ENCODE measurements at regions of chr15 and their contacts with region 1.

Region 1: DNA sequence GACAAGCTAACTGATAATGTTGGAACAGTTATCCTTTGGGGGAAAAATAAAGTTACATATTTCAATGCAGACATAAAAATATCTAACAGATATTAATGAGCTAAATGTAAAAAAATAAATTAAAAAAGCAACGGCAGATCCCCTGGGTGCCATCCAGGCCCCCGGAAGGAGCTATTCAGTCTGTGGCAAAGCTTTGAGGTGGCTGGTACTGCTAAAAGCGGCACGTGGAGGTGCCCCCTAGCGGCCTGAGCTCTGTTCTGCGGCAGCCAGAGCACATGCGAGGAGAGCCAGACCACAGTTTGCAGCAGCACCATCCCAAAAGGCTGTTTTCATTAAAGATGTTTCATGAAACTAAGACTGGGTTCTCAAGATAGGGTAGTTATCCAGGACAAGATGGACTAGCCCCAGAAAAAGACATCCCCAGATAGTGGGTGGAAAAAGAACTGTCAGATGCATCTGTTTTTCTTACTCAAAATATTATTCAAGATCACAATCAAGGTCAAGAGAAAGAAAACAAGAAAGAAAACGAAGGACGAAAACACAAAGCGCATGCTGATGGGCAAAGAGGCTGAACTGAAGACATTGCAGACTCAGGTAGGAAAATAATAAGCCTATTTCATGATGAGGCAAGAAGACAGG is 18.7 kb downstream of the AP3S2 start:
- DNase-seq: peak; percentile 86
- H3K4me3 ChIP-seq: no peak overlapping the region
- H3K27ac ChIP-seq: no peak overlapping the region; a peak in 1 of 4 replicates
- H3K4me1 ChIP-seq: no peaks in the 10 kb centered on the region
- H3K27me3 ChIP-seq: no peaks in the 10 kb centered on the region
- CTCF ChIP-seq: peak; percentile 98
- EP300 ChIP-seq: no peak
- RAD21 ChIP-seq: peak; percentile 85

Region 2: DNA sequence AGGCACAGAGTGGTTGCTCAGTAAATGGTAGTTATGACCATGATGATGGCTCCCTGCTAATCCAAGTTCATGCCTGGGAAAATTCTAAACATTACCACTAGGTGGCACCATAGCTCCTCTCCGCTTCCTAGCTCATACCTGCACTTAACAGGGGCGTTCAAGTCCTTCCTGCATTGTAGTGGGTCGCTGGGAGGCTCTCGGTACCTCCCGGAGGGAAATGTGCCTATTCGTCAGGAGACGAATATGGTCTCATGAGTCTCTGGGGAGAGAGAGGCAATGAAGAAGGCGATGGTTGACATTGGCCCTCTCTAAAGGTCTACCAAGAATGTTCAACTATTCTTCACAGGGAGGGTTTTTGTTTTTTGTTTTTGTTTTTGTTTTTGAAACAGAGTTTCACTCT is 134.9 kb before region 1 on chr15:
- CTCF ChIA-PET with region 1: interaction called, 38 read pairs
- POLR2A ChIA-PET with region 1: interaction called, 7 read pairs
- DNase-seq: peak; percentile 84
- H3K4me3 ChIP-seq: no peak overlapping the region; a peak in 1 of 4 replicates
- H3K27ac ChIP-seq: no peak overlapping the region
- H3K4me1 ChIP-seq: no peaks in the 10 kb centered on the region
- H3K27me3 ChIP-seq: no peaks in the 10 kb centered on the region; the same call in 1 of the 2 replicates
- CTCF ChIP-seq: peak; percentile 85
- EP300 ChIP-seq: no peak
- RAD21 ChIP-seq: peak; percentile 92

Region 3: GRCh38 chr15:89760303-89761008 is 114.6 kb before region 1 on chr15:
- CTCF ChIA-PET with region 1: interaction called, 153 read pairs
- POLR2A ChIA-PET with region 1: interaction called, 6 read pairs
- DNase-seq: peak; percentile 90
- H3K4me3 ChIP-seq: peak overlapping the region in 1 of 2 experiments; percentile 35; a peak in 1 of 4 replicates
- H3K27ac ChIP-seq: peak overlapping the region in 1 of 2 experiments; percentile 39; a peak in 1 of 4 replicates
- H3K4me1 ChIP-seq: peaks cover 4 to 20% of the 10 kb centered on the region in 2 experiments; a peak in 1 of 4 replicates
- H3K27me3 ChIP-seq: no peaks in the 10 kb centered on the region
- CTCF ChIP-seq: peak; percentile 95
- EP300 ChIP-seq: peak in 1 of 2 experiments; percentile 46; a peak in 1 of 4 replicates
- RAD21 ChIP-seq: peak; percentile 90

Region 4: DNA sequence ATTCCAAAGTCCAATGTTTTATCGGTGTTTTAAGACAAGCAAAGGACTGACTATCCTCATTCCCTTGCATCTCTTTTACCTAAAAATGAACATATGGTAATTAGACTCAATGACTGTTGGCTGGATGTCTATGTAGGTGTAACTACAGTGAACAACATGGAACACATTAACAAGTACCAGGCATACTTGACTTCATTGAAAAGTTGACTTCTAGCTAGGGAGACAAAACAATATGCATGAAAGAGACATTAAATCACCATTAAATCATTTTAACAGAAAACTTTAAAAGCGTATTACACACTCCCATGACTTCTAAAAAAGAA is 26.1 kb before region 1 on chr15:
- CTCF ChIA-PET with region 1: interaction called, 12 read pairs
- POLR2A ChIA-PET with region 1: no interaction called
- DNase-seq: no peak
- H3K4me3 ChIP-seq: no peak overlapping the region
- H3K27ac ChIP-seq: peak overlapping the region; percentile 55 to 95; a peak in 3 of 4 replicates
- H3K4me1 ChIP-seq: peaks cover 0 to 34% of the 10 kb centered on the region in 2 experiments; a peak in 3 of 4 replicates
- H3K27me3 ChIP-seq: no peaks in the 10 kb centered on the region
- CTCF ChIP-seq: no peak
- EP300 ChIP-seq: no peak
- RAD21 ChIP-seq: no peak

Region 5: GRCh38 chr15:89888214-89888804 is 13.3 kb after region 1 on chr15:
- CTCF ChIA-PET with region 1: interaction called, 58 read pairs
- POLR2A ChIA-PET with region 1: interaction called, 6 read pairs
- DNase-seq: no peak
- H3K4me3 ChIP-seq: no peak overlapping the region
- H3K27ac ChIP-seq: no peak overlapping the region
- H3K4me1 ChIP-seq: peaks cover 0 to 2% of the 10 kb centered on the region in 2 experiments; a peak in 1 of 4 replicates
- H3K27me3 ChIP-seq: no peaks in the 10 kb centered on the region
- CTCF ChIP-seq: peak; percentile 67
- EP300 ChIP-seq: no peak
- RAD21 ChIP-seq: peak; percentile 59